H1 (cell line): ENCODE measurements at regions of chr12 and their contacts with region 1.

Region 1: GRCh38 chr12:122051231-122051876 is 27.2 kb upstream of the MLXIP start:
- DNase-seq: no peak
- H3K4me3 ChIP-seq: no peak overlapping the region
- H3K27ac ChIP-seq: no peak overlapping the region
- H3K4me1 ChIP-seq: 0 out of 7 replicates have a peak, but pooled peaks cover 0 to 2% (median 0%) of the 10 kb centered on the region in 4 experiments
- H3K27me3 ChIP-seq: no peaks in the 10 kb centered on the region
- CTCF ChIP-seq: no peak
- EP300 ChIP-seq: no peak
- POLR2A ChIP-seq: no peak
- RAD21 ChIP-seq: no peak

Region 2: GRCh38 chr12:121417847-121418246 is 633.5 kb before region 1 on chr12:
- CTCF ChIA-PET with region 1: no interaction called
- POLR2A ChIA-PET with region 1: no interaction called
- DNase-seq: no peak
- H3K4me3 ChIP-seq: no peak overlapping the region
- H3K27ac ChIP-seq: no peak overlapping the region
- H3K4me1 ChIP-seq: no peaks in the 10 kb centered on the region
- H3K27me3 ChIP-seq: no peaks in the 10 kb centered on the region
- CTCF ChIP-seq: no peak
- EP300 ChIP-seq: no peak
- POLR2A ChIP-seq: no peak
- RAD21 ChIP-seq: no peak

Region 3: GRCh38 chr12:122031342-122032216 is 19.8 kb before region 1 on chr12:
- CTCF ChIA-PET with region 1: interaction called, 12 read pairs
- POLR2A ChIA-PET with region 1: no interaction called
- DNase-seq: peak; percentile 36 to 96
- H3K4me3 ChIP-seq: no peak overlapping the region
- H3K27ac ChIP-seq: no peak overlapping the region
- H3K4me1 ChIP-seq: peaks cover 0 to 9% (median 5%) of the 10 kb centered on the region in 4 experiments; a peak in 6 of 7 replicates
- H3K27me3 ChIP-seq: no peaks in the 10 kb centered on the region
- CTCF ChIP-seq: peak in 2 of 3 experiments; percentile 87 to 88; a peak in 3 of 4 replicates
- EP300 ChIP-seq: no peak
- POLR2A ChIP-seq: no peak
- RAD21 ChIP-seq: peak; percentile 49 to 69

Region 4: DNA sequence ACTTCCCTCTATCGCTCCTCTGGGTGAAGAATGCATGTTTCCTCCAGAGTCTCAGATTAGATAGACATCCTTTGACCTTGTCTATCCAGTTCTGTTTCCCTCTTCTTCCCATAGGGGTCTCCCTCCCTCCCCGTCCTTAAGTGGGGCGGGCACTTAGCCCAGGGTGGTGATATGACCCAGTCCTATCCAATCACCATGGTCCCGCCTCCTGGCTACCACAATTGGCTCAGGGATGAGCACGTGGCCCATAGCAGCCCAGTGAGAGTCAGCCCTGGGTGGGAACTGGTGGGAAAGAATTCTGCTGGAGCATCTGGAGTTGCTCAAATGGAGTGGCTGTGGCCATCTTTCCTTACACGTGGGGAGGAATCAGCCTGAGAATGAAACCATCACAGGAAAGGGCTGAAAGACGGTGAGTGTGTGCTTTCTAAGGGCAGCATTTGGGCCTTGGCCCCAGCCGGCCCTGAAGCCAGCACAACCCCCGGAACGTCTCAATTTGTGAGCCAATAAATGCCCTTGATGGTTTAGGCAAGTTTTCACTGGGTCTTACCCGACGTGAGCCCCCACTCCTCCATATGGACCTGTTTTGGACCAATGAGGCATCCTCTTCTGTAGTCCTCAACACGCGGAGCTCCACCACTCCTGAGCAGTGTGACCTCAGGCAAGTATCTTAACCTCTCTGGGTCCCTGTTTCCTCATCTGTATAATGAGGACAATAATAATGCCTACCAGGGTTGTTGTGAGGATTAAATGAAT is 12.8 kb after region 1 on chr12:
- CTCF ChIA-PET with region 1: interaction called, 20 read pairs
- POLR2A ChIA-PET with region 1: interaction called, 12 read pairs
- DNase-seq: peak; percentile 87 to 88
- H3K4me3 ChIP-seq: peak overlapping the region; percentile 2 to 44 (median 10); a peak in 4 of 8 replicates
- H3K27ac ChIP-seq: 0 out of 2 replicates have a peak overlapping the region, but pooled peaks have one; percentile 24
- H3K4me1 ChIP-seq: peaks cover 0 to 21% (median 10%) of the 10 kb centered on the region in 4 experiments; a peak in 6 of 7 replicates
- H3K27me3 ChIP-seq: no peaks in the 10 kb centered on the region
- CTCF ChIP-seq: peak; percentile 45 to 78 (median 47)
- EP300 ChIP-seq: no peak
- POLR2A ChIP-seq: peak in 1 of 2 experiments; percentile 27; a peak in 1 of 3 replicates
- RAD21 ChIP-seq: peak; percentile 25 to 40